ENCODE measurements at regions of chr17 and their contacts with region 1.

Region 1: DNA sequence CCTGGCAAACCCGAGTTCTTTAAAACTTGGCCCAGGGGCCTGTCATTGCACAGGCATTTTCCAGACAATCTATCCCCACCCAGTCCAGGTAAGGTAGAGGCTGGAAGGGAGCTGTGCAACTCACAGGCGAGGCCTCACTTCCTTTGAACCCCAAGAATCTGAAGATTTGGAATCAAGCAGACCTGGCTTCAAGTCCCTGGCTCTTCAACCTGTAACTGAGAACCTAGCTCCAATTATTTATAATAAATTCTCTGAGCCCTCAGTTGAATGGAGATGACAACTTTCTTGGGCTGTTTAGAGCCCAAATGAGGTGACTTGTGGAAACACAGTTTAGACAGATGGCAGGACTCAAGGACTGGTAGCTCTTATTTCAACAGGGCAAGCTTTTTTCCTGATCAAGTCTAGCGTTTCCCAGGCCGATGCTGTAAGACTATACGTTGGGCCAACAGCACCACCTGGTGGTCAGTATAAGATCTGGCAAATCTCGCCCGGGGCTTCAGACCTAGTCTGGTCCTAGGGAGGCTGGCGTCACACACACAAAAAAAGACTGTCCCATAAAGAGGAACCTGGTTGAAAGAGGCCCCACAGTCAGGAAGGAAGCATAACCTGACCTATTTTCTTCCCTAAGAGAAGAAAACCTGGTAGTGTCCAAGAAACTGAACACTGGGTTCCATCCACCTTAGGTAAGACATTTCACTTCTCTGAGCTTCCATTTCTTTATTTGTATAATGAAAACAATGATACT is 117.9 kb downstream of the C17orf67 start:
- DNase-seq: peak; percentile 81 to 89
- ATAC-seq: peak; percentile 92
- H3K4me3 ChIP-seq: no peak overlapping the region
- H3K27ac ChIP-seq: no peak overlapping the region
- H3K4me1 ChIP-seq: no peaks in the 10 kb centered on the region
- H3K27me3 ChIP-seq: no peaks in the 10 kb centered on the region

Region 2: GRCh38 chr17:56592487-56593085 is 123.2 kb before region 1 on chr17:
- intact Hi-C with region 1: loop called (anchors 2 kb)
- DNase-seq: peak; percentile 60 to 87
- ATAC-seq: peak; percentile 89
- H3K4me3 ChIP-seq: peak overlapping the region; percentile 0 to 55
- H3K27ac ChIP-seq: no peak overlapping the region
- H3K4me1 ChIP-seq: peaks cover 0 to 4% of the 10 kb centered on the region in 2 donors
- H3K27me3 ChIP-seq: no peaks in the 10 kb centered on the region

Region 3: GRCh38 chr17:56603486-56604238 is 112.1 kb before region 1 on chr17:
- intact Hi-C with region 1: no loop called
- DNase-seq: no peak
- ATAC-seq: no peak
- H3K4me3 ChIP-seq: no peak overlapping the region
- H3K27ac ChIP-seq: no peak overlapping the region
- H3K4me1 ChIP-seq: no peaks in the 10 kb centered on the region
- H3K27me3 ChIP-seq: no peaks in the 10 kb centered on the region

Region 4: DNA sequence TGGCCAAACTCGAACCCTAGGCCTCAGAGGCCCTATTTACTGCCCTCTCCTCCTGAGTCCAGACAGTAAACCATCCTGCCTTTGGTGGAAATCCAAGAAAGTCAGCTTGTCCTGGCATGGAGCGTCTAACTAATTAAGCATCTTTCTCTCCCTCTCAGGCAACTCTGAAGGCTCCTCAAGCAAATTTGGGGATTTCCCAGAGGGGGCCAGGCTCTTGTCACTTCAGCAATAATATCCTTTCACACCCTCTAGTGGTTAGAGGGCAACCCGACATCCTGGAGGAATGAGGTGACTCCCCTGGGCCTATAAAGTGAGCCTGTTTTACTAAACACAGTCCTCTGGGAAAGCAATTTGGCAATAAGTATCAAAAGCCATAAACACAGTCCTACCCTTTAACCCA is 61.9 kb before region 1 on chr17:
- intact Hi-C with region 1: no loop called
- DNase-seq: no peak
- ATAC-seq: no peak
- H3K4me3 ChIP-seq: no peak overlapping the region
- H3K27ac ChIP-seq: no peak overlapping the region
- H3K4me1 ChIP-seq: no peaks in the 10 kb centered on the region
- H3K27me3 ChIP-seq: no peaks in the 10 kb centered on the region